OCI-LY7 (cell line): ENCODE measurements at regions of chr7 and their contacts with region 1.

Region 1: GRCh38 chr7:23570592-23571200 is 26.5 kb upstream of the CCDC126 start:
- DNase-seq: peak; percentile 71
- H3K4me3 ChIP-seq: no peak overlapping the region
- H3K27ac ChIP-seq: no peak overlapping the region
- H3K4me1 ChIP-seq: no peaks in the 10 kb centered on the region
- CTCF ChIP-seq: peak; percentile 94

Region 2: DNA sequence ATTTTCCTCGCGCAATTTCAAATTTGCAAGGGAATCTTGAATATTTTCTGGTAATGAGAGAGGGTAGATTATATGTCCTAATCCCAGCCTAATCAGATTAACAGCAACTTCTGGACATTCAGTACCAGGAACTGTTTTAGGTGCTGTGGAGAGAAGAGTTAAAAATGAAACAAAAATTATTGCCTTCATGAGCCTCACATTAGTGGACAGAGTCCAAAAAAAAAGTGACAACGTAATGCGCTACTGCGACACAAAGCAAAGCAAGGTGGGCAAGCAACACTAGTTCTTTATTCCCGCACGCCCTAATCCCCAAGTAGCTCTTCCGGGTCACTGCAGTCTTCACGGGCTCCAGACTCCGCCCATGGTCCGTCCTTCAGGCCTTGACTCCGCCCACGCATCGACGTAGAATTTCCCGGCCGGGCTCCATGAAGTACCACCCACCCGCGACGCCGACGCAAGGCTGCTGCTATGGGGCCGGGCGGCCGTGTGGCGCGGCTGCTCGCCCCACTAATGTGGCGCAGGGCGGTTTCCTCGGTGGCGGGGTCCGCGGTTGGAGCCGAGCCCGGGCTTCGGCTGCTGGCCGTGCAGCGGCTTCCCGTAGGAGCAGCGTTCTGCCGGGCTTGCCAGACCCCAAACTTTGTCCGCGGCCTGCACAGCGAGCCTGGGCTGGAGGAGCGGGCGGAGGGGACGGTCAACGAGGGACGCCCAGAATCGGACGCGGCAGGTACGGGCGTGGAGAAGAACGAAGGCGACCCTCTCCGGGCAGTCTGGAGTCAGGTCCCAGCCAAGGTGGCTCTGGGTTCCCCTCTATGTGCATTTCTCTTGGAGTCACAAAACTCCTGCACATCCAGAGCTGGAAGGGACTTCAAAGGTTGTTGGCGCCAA is 271.6 kb before region 1 on chr7 and contains the start of gene MALSU1:
- CTCF ChIA-PET with region 1: interaction called, 15 read pairs
- POLR2A ChIA-PET with region 1: no interaction called
- intact Hi-C with region 1: no loop called
- DNase-seq: peak; percentile 98
- H3K4me3 ChIP-seq: peak within 1 kb of the TSS; percentile 89
- H3K27ac ChIP-seq: peak within 1 kb of the TSS; percentile 25
- H3K4me1 ChIP-seq: peaks cover 14% of the 10 kb centered on the region
- CTCF ChIP-seq: no peak
- total RNA-seq, gene MALSU1: 107 and 132 TPM in 2 replicates

Region 3: GRCh38 chr7:23654508-23654907 is 83.8 kb after region 1 on chr7:
- CTCF ChIA-PET with region 1: no interaction called
- POLR2A ChIA-PET with region 1: interaction called, 3 read pairs
- intact Hi-C with region 1: loop called (anchors 5 kb)
- DNase-seq: peak; percentile 23
- H3K4me3 ChIP-seq: no peak overlapping the region
- H3K27ac ChIP-seq: no peak overlapping the region
- H3K4me1 ChIP-seq: no peaks in the 10 kb centered on the region
- CTCF ChIP-seq: peak; percentile 69